ENCODE measurements at regions of chr3 and their contacts with region 1.

Region 1: DNA sequence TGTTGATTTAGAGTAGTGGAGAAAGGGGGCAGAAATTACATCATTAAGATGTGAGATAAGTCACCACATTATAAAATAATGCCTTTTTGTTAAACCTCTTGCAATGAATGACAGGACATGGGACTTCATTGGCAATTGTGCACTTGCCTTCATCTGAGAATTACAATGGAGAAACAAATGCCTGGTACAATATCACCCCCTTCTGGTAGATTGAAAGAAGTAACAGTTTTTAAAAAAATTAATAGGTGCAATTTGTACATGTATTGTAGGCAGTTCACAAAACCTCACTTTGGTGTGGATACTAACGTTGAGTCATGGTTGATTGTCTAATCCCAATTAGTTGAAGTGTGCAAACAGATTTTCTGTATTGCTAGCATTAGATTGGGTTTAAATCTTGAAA is 4.6 kb upstream of the P2RY14 start:
- DNase-seq: no peak
- H3K4me3 ChIP-seq: no peak overlapping the region
- H3K27me3 ChIP-seq: no peaks in the 10 kb centered on the region
- CTCF ChIP-seq: peak; percentile 57

Region 2: GRCh38 chr3:151168269-151169094 is 114.4 kb before region 1 on chr3:
- CTCF ChIA-PET with region 1: interaction called, 94 read pairs
- POLR2A ChIA-PET with region 1: no interaction called
- DNase-seq: no peak
- H3K4me3 ChIP-seq: no peak overlapping the region
- H3K27me3 ChIP-seq: no peaks in the 10 kb centered on the region
- CTCF ChIP-seq: peak; percentile 85

Region 3: GRCh38 chr3:151262871-151263525 is 19.9 kb before region 1 on chr3:
- CTCF ChIA-PET with region 1: interaction called, 10 read pairs
- POLR2A ChIA-PET with region 1: no interaction called
- DNase-seq: peak; percentile 25
- H3K4me3 ChIP-seq: no peak overlapping the region
- H3K27me3 ChIP-seq: no peaks in the 10 kb centered on the region
- CTCF ChIP-seq: no peak

Region 4: GRCh38 chr3:151299006-151299405 is 16.1 kb after region 1 on chr3:
- CTCF ChIA-PET with region 1: interaction called, 10 read pairs
- POLR2A ChIA-PET with region 1: no interaction called
- DNase-seq: no peak
- H3K4me3 ChIP-seq: no peak overlapping the region
- H3K27me3 ChIP-seq: peaks cover 2% of the 10 kb centered on the region
- CTCF ChIP-seq: no peak

Region 5: DNA sequence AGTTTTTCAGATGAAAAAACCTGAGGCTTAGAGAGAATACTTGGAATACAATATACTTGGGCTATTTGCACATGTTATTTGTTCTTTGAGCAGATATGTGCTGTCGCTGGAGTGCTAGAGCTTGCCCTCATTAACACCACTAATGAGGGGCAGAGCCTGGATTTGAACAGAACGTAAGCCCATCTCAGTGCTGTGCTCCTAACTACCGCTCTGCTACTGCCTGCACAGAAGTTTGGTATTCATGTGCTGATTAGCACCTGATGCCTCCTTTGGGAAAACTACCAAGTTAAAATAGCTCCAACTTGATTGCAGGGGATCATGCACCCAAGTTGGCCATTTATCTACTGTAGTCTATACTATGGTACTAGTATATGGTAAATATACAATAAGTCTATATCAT is 30.1 kb after region 1 on chr3:
- CTCF ChIA-PET with region 1: no interaction called
- POLR2A ChIA-PET with region 1: no interaction called
- DNase-seq: no peak
- H3K4me3 ChIP-seq: no peak overlapping the region
- H3K27me3 ChIP-seq: no peaks in the 10 kb centered on the region
- CTCF ChIP-seq: no peak

Measured in BJ (cell line).